GM10248 (cell line): ENCODE measurements at regions of chr5 and their contacts with region 1.

Region 1: DNA sequence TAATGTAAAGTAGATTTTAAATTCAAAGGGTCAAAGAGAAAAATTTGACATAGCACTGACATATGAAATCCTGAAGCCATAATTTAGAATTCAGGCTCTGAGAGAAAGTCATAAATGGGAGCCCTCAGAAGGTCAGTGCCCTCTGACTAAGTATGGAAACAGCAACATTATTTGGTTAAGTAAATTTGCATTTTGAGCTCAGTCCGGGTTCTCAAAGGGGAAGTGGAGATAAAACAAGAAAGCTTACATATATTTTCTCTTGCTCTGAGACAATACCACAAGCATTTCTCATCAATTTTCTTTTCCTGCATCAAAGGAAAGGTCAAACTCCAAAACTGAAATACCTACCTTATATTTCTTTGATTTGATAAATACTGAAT is 348.0 kb downstream of the SEMA5A start:
- DNase-seq: peak; percentile 58
- CTCF ChIP-seq: no peak

Region 2: DNA sequence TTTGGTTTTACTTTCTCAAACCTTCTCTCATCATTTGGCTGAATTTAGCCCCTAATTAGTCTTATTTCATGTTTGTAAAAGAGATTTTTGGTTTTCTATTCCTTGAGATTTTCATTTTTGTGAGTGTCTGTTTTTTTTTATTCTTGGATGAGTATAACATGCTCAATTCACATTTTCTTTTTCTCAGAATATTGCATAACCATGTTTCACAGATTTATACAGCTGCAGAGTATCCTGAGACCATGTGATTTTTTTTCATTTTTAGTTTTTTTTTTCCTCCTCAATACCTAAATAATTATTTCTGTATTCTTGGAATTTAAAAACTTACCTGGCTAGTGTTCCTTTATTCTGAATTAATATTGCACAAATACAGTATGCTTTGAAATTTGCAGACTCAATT is 13.9 kb before region 1 on chr5:
- CTCF ChIA-PET with region 1: interaction called, 11 read pairs
- POLR2A ChIA-PET with region 1: no interaction called
- DNase-seq: no peak
- CTCF ChIP-seq: no peak

Region 3: GRCh38 chr5:9207817-9208418 is 10.0 kb after region 1 on chr5:
- CTCF ChIA-PET with region 1: interaction called, 12 read pairs
- POLR2A ChIA-PET with region 1: no interaction called
- DNase-seq: peak; percentile 38
- CTCF ChIP-seq: peak; percentile 56